Activated CD4-positive, alpha-beta memory T cell treated with anti-CD3 and anti-CD28 coated beads for 36 hours (primary cell): ENCODE measurements at regions of chr2 and their contacts with region 1.

Region 1: GRCh38 chr2:190718652-190719526 is 70.0 kb downstream of the NAB1 start:
- DNase-seq: peak; percentile 91
- H3K4me3 Mint-ChIP-seq: peak overlapping the region; percentile 62
- H3K27ac Mint-ChIP-seq: peak overlapping the region; percentile 97
- H3K4me1 Mint-ChIP-seq: peaks cover 84% of the 10 kb centered on the region
- H3K27me3 Mint-ChIP-seq: no peaks in the 10 kb centered on the region

Region 2: GRCh38 chr2:189661148-189661956 is 1057.5 kb before region 1 on chr2 and contains the start of gene ASNSD1:
- CTCF ChIA-PET with region 1: no interaction called
- POLR2A ChIA-PET with region 1: no interaction called
- intact Hi-C with region 1: loop called (anchors 1 kb)
- DNase-seq: peak; percentile 98
- H3K4me3 Mint-ChIP-seq: no peak within 1 kb of the TSS
- H3K27ac Mint-ChIP-seq: no peak within 1 kb of the TSS
- H3K4me1 Mint-ChIP-seq: peaks cover 51% of the 10 kb centered on the region
- H3K27me3 Mint-ChIP-seq: no peaks in the 10 kb centered on the region
- total RNA-seq, gene ASNSD1: 44.5 to 47.0 TPM

Region 3: GRCh38 chr2:190648289-190649034 is 70.4 kb before region 1 on chr2:
- CTCF ChIA-PET with region 1: interaction called, 3 read pairs
- POLR2A ChIA-PET with region 1: interaction called, 10 read pairs
- intact Hi-C with region 1: loop called (anchors 1 kb)
- DNase-seq: peak; percentile 85
- H3K4me3 Mint-ChIP-seq: peak overlapping the region; percentile 75
- H3K27ac Mint-ChIP-seq: peak overlapping the region; percentile 82
- H3K4me1 Mint-ChIP-seq: peaks cover 38% of the 10 kb centered on the region
- H3K27me3 Mint-ChIP-seq: no peaks in the 10 kb centered on the region

Region 4: DNA sequence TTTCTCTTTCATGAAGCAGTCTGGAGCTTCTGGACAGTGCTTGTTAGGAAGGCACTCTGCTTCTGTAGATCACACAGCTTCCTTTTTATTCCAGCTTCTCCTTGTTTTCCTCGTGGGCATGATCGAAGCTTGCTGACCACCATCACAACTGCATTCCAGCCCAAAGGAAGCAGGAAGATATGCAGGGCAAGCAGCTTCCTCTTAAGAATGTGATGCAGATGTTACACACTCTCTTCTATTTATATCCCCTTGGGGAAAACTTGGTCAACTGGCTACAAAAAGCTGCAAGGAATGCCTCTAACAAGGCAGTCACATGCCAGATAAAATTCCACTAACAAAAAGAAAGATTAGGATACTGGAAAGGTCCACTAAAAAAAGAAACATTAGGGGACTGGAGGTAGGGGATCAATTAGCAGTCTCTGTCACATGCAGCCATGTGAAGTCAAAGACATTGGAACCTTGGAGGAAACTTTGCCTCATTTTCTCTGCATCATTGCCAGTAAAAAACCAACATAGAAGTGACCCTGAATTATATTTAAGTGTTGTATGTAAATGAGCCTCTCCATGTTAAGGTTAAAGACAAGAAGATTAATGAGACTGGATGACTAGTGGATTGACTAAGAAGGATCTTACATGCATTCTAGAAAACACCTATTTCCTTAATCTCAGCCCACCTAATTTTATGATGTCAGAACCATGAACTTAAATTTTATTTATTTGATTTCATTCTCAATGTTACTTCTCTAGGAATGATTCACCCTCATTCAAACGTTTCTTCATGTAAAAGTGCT is 28.3 kb after region 1 on chr2:
- CTCF ChIA-PET with region 1: no interaction called
- POLR2A ChIA-PET with region 1: interaction called, 3 read pairs
- intact Hi-C with region 1: loop called (anchors 1 kb)
- DNase-seq: no peak
- H3K4me3 Mint-ChIP-seq: no peak overlapping the region
- H3K27ac Mint-ChIP-seq: no peak overlapping the region
- H3K4me1 Mint-ChIP-seq: peaks cover 22% of the 10 kb centered on the region
- H3K27me3 Mint-ChIP-seq: no peaks in the 10 kb centered on the region

Region 5: DNA sequence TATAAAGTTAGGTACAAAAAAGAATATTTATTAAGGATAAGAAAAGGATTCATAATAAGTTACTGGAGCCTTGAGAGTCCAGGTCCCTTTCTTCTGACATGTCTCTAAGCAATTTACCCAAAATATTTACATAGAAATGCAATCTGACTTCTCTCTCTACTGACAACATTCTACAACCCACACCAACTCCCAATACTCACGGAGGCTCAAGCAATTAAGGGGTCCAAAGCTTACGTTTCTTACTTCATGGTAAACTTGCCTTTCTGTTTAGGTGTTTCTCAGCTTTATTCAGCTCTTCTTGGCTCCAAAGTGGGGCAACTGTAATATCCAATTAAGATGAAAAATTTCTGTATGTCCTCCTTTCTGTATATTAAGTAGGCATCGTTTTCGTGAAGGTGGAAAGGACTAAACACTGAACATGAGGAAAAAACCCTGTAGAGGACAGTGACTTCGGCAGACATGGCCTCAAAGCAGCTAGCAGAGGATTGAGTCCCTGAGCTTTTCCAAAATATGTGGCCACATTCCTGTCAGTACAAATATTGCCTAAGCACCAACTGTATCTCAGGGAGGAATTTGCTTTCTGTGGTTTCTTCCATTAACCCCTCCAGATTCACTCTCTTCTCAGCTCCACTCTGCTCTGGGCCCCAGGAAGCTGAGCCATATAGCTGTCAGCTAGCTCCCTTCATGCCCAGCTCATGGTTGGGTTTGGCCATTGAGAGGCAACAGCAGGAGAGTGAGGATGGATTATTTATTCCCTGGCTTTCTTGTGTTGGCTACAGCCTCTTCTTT is 93.8 kb after region 1 on chr2:
- CTCF ChIA-PET with region 1: no interaction called
- POLR2A ChIA-PET with region 1: no interaction called
- intact Hi-C with region 1: no loop called
- DNase-seq: no peak
- H3K4me3 Mint-ChIP-seq: no peak overlapping the region
- H3K27ac Mint-ChIP-seq: no peak overlapping the region
- H3K4me1 Mint-ChIP-seq: peaks cover 16% of the 10 kb centered on the region
- H3K27me3 Mint-ChIP-seq: no peaks in the 10 kb centered on the region

Region 6: GRCh38 chr2:190880378-190881073 is 161.6 kb after region 1 on chr2 and contains the start of gene GLS:
- CTCF ChIA-PET with region 1: no interaction called
- POLR2A ChIA-PET with region 1: interaction called, 9 read pairs
- intact Hi-C with region 1: loop called (anchors 1 kb)
- DNase-seq: peak; percentile 98
- H3K4me3 Mint-ChIP-seq: peak within 1 kb of the TSS; percentile 98
- H3K27ac Mint-ChIP-seq: peak within 1 kb of the TSS; percentile 99
- H3K4me1 Mint-ChIP-seq: peaks cover 36% of the 10 kb centered on the region
- H3K27me3 Mint-ChIP-seq: peaks cover 4% of the 10 kb centered on the region
- total RNA-seq, gene GLS: 209 to 210 TPM

Region 7: GRCh38 chr2:191189112-191189635 is 470.3 kb after region 1 on chr2:
- CTCF ChIA-PET with region 1: no interaction called
- POLR2A ChIA-PET with region 1: no interaction called
- intact Hi-C with region 1: loop called (anchors 1 kb)
- DNase-seq: no peak
- H3K4me3 Mint-ChIP-seq: peak overlapping the region; percentile 27
- H3K27ac Mint-ChIP-seq: peak overlapping the region; percentile 10
- H3K4me1 Mint-ChIP-seq: peaks cover 58% of the 10 kb centered on the region
- H3K27me3 Mint-ChIP-seq: no peaks in the 10 kb centered on the region